OCI-LY7 (cell line): ENCODE measurements at regions of chr5 and their contacts with region 1.

Region 1: GRCh38 chr5:111092062-111092853 is at the start of gene WDR36:
- DNase-seq: peak; percentile 94
- H3K4me3 ChIP-seq: peak within 1 kb of the TSS; percentile 91
- H3K27ac ChIP-seq: peak within 1 kb of the TSS; percentile 48
- H3K4me1 ChIP-seq: peaks cover 27% of the 10 kb centered on the region
- CTCF ChIP-seq: no peak
- total RNA-seq, gene WDR36: 39.1 and 46.5 TPM in 2 replicates

Region 2: GRCh38 chr5:109409844-109410388 is 1682.3 kb before region 1 on chr5 and contains the start of gene PJA2:
- CTCF ChIA-PET with region 1: no interaction called
- POLR2A ChIA-PET with region 1: interaction called, 3 read pairs
- intact Hi-C with region 1: loop called (anchors 10 kb)
- DNase-seq: peak; percentile 99
- H3K4me3 ChIP-seq: peak within 1 kb of the TSS; percentile 94
- H3K27ac ChIP-seq: peak within 1 kb of the TSS; percentile 94
- H3K4me1 ChIP-seq: peaks cover 28% of the 10 kb centered on the region
- CTCF ChIP-seq: no peak
- total RNA-seq, gene PJA2: 41.3 and 47.9 TPM in 2 replicates

Region 3: GRCh38 chr5:110738812-110739651 is 353.2 kb before region 1 on chr5 and contains the start of gene SLC25A46:
- CTCF ChIA-PET with region 1: no interaction called
- POLR2A ChIA-PET with region 1: interaction called, 5 read pairs
- intact Hi-C with region 1: loop called (anchors 1 kb)
- DNase-seq: peak; percentile 92
- H3K4me3 ChIP-seq: peak within 1 kb of the TSS; percentile 94
- H3K27ac ChIP-seq: peak within 1 kb of the TSS; percentile 66
- H3K4me1 ChIP-seq: peaks cover 16% of the 10 kb centered on the region
- CTCF ChIP-seq: no peak
- total RNA-seq, gene SLC25A46: 36.4 and 37.8 TPM in 2 replicates

Region 4: GRCh38 chr5:111079846-111080245 is 12.4 kb before region 1 on chr5:
- CTCF ChIA-PET with region 1: no interaction called
- POLR2A ChIA-PET with region 1: interaction called, 22 read pairs
- intact Hi-C with region 1: no loop called
- DNase-seq: no peak
- H3K4me3 ChIP-seq: no peak overlapping the region
- H3K27ac ChIP-seq: no peak overlapping the region
- H3K4me1 ChIP-seq: peaks cover 31% of the 10 kb centered on the region
- CTCF ChIP-seq: no peak

Region 5: DNA sequence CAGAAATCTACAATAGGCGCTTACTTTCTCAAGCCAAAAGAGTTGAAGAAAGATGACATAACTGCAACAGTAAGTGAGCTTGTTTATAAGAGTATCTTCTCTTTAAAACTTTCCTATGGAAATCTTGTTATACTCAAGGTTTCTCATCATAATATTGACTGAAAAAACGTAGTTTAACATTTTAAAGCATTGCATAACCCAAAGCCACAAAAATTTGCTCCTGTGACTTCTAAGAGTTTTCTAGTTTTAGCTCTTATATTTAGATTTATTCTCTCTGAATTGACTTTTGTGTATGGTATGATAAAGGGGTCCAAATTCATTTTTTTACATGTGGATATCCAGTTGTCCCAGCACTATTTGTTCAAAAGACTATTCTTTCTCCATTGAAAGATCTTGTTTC is 15.1 kb after region 1 on chr5:
- CTCF ChIA-PET with region 1: no interaction called
- POLR2A ChIA-PET with region 1: interaction called, 21 read pairs
- intact Hi-C with region 1: no loop called
- DNase-seq: no peak
- H3K4me3 ChIP-seq: no peak overlapping the region
- H3K27ac ChIP-seq: no peak overlapping the region
- H3K4me1 ChIP-seq: no peaks in the 10 kb centered on the region
- CTCF ChIP-seq: no peak

Region 6: GRCh38 chr5:111143910-111144309 is 51.7 kb after region 1 on chr5:
- CTCF ChIA-PET with region 1: no interaction called
- POLR2A ChIA-PET with region 1: no interaction called
- intact Hi-C with region 1: no loop called
- DNase-seq: no peak
- H3K4me3 ChIP-seq: no peak overlapping the region
- H3K27ac ChIP-seq: no peak overlapping the region
- H3K4me1 ChIP-seq: no peaks in the 10 kb centered on the region
- CTCF ChIP-seq: no peak

Region 7: DNA sequence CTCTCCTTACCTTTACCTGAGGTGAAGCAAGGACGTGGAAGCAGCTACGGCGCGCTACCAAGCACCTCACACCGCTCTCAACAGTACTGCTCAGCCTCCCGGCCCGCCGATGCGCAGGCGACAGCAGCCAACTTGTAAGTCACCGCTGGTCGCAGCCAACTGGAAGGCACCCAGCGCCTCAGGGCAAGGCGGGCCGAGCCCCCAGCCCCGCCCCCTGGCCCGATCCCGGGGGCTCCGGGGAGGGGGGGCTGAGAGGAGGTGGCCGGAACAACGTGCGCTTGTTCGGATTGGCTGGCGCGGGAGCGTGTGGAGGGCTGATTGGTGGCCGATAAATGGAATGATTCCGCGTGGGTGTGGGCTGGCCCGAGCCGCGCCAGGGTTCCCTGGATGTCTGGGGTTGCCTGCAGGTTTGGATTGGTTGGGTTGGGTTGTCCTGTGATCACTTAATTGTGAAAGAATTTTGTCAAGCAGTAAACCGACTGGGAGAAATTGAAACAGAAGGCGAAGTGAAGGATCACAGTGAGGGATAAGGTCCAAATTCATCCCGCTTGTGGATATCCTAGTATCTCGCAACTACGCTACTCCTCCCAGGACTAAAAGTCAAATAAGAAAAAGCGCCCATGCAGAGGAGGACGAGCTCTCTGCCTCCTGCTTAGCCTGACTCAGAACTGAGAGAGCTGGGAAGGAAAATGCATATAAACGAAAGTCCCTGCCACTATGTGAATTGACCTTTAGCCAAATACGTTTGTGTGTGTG is 420.3 kb after region 1 on chr5 and contains the start of gene STARD4:
- CTCF ChIA-PET with region 1: no interaction called
- POLR2A ChIA-PET with region 1: interaction called, 3 read pairs
- intact Hi-C with region 1: loop called (anchors 5 kb)
- DNase-seq: peak; percentile 96
- H3K4me3 ChIP-seq: peak within 1 kb of the TSS; percentile 91
- H3K27ac ChIP-seq: peak within 1 kb of the TSS; percentile 69
- H3K4me1 ChIP-seq: peaks cover 38% of the 10 kb centered on the region
- CTCF ChIP-seq: no peak
- total RNA-seq, gene STARD4: 28.1 and 30.4 TPM in 2 replicates

Region 8: GRCh38 chr5:111703662-111704061 is 611.4 kb after region 1 on chr5:
- CTCF ChIA-PET with region 1: no interaction called
- POLR2A ChIA-PET with region 1: no interaction called
- intact Hi-C with region 1: loop called (anchors 5 kb)
- DNase-seq: peak; percentile 93
- H3K4me3 ChIP-seq: peak overlapping the region; percentile 67
- H3K27ac ChIP-seq: peak overlapping the region; percentile 98
- H3K4me1 ChIP-seq: peaks cover 62% of the 10 kb centered on the region
- CTCF ChIP-seq: no peak